ENCODE measurements at regions of chr3 and their contacts with region 1.

Region 1: DNA sequence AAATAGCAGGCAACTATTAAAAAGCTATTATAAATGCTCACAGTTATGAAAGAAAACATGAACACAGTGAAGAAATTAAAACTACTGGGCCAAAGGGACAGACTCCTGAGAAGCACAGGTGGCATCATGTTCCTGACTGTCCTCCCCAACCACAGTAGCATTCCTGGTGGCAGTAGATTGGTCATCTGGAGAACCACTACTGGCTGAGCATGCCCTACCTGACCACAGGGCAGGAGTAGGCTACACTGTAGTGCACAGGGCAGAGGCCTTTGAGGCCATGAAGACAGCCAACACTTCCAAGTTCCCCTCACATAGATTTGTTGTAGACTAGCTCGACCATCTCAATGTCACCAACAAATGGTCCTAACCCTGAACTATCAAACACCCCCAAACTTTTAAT is 49.2 kb downstream of the NBEAL2 start:
- DNase-seq: no peak
- ATAC-seq: no peak
- H3K4me3 ChIP-seq: no peak overlapping the region
- H3K4me3 Mint-ChIP-seq: no peak overlapping the region
- H3K27ac ChIP-seq: no peak overlapping the region
- H3K27ac Mint-ChIP-seq: peak overlapping the region in 1 of 2 donors; percentile 48
- H3K4me1 ChIP-seq: no peaks in the 10 kb centered on the region
- H3K4me1 Mint-ChIP-seq: peaks cover 42 to 56% (median 56%) of the 10 kb centered on the region in 3 donors
- H3K27me3 ChIP-seq: no peaks in the 10 kb centered on the region
- H3K27me3 Mint-ChIP-seq: no peaks in the 10 kb centered on the region

Region 2: GRCh38 chr3:47042231-47042791 is 13.6 kb after region 1 on chr3:
- CTCF ChIA-PET with region 1: no interaction called
- POLR2A ChIA-PET with region 1: interaction called in 1 of 2 experiments, 12 read pairs
- DNase-seq: no peak
- ATAC-seq: no peak
- H3K4me3 ChIP-seq: no peak overlapping the region
- H3K4me3 Mint-ChIP-seq: no peak overlapping the region
- H3K27ac ChIP-seq: no peak overlapping the region
- H3K27ac Mint-ChIP-seq: peak overlapping the region; percentile 39 to 65
- H3K4me1 ChIP-seq: peaks cover 5 to 12% of the 10 kb centered on the region in 2 experiments
- H3K4me1 Mint-ChIP-seq: peaks cover 20 to 32% (median 29%) of the 10 kb centered on the region in 3 donors
- H3K27me3 ChIP-seq: no peaks in the 10 kb centered on the region
- H3K27me3 Mint-ChIP-seq: no peaks in the 10 kb centered on the region